Dorsolateral prefrontal cortex (tissue), 120 donors: ENCODE measurements at regions of chr7 and their contacts with region 1.

Region 1: DNA sequence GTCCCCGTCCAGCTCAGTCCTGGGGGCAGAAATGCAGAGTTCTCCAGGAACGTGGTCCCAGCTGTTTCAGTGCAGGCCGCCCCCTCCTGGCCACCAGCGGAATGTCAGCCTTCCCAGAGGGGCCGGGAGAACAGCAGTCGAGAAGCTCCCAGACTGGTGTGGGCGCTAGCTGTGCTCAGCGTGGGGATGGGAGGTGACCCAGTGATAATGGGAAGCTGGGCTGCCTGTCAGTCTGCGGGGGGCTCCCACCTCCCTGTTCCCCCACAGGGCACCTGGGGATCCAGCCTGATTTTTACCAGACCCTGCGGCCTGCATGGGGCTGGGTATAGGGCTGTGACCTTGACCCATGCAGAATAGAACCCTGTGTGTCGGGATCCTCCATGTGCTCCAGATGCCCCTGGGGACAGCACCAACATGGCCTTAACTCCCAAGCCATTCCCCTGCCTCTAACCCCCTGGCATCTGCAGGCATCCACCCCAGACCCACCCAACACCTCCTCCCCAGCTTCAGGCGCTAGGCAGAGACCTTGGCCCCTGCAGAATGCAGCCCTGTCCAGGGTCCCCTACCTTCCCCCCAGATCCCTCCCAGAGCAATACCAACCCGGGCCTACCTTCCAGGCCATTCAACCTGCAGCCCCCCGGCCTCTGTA is 946 bp upstream of the ELN start:
- DNase-seq: peak; percentile 75 to 89 (median 85)
- H3K4me3 ChIP-seq: peak overlapping the region in 50 of 59 donors; percentile 22 to 72 (median 58)
- H3K27ac ChIP-seq: peak overlapping the region; percentile 27 to 93 (median 83)
- H3K27me3 ChIP-seq: peaks cover 0 to 4% (median 0%) of the 10 kb centered on the region in 45 donors
- CTCF ChIP-seq: peak; percentile 76 to 98 (median 94)

Region 2: GRCh38 chr7:73811760-73812168 is 215.3 kb before region 1 on chr7:
- intact Hi-C with region 1: no loop called
- DNase-seq: peak in 5 of 10 donors; percentile 34 to 53 (median 39)
- H3K4me3 ChIP-seq: no peak overlapping the region
- H3K27ac ChIP-seq: no peak overlapping the region
- H3K27me3 ChIP-seq: peaks cover 0 to 13% (median 0%) of the 10 kb centered on the region in 45 donors
- CTCF ChIP-seq: peak in 54 of 56 donors; percentile 23 to 75 (median 58)

Region 3: GRCh38 chr7:73865738-73866445 is 161.1 kb before region 1 on chr7:
- intact Hi-C with region 1: loop called (anchors 2 to 10 kb)
- DNase-seq: peak in 6 of 10 donors; percentile 14 to 59 (median 46)
- H3K4me3 ChIP-seq: no peak overlapping the region
- H3K27ac ChIP-seq: no peak overlapping the region
- H3K27me3 ChIP-seq: no peaks in the 10 kb centered on the region
- CTCF ChIP-seq: peak in 55 of 56 donors; percentile 37 to 75 (median 61)

Region 4: DNA sequence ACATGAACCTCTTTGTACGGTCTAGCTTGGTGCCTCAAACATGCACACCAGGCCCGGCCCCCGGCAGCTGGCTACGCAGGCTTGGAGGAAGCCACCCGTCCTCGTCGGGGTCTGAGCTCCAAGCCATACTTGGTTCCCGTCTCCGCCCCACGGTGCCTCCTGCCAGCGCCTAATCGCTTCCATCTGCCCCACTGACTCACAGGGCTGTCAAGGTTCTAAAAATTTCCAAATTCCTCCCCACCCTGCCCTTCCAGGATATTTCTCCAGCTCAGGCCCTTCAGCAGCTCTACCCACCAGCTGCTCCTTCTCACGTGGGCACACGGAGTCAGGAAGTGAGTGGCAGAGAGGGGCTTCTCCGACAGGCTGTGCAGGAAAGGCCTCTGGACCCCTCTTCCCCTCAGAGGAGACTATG is 127.3 kb before region 1 on chr7:
- intact Hi-C with region 1: no loop called
- DNase-seq: no peak
- H3K4me3 ChIP-seq: no peak overlapping the region
- H3K27ac ChIP-seq: no peak overlapping the region
- H3K27me3 ChIP-seq: no peaks in the 10 kb centered on the region
- CTCF ChIP-seq: no peak

Region 5: DNA sequence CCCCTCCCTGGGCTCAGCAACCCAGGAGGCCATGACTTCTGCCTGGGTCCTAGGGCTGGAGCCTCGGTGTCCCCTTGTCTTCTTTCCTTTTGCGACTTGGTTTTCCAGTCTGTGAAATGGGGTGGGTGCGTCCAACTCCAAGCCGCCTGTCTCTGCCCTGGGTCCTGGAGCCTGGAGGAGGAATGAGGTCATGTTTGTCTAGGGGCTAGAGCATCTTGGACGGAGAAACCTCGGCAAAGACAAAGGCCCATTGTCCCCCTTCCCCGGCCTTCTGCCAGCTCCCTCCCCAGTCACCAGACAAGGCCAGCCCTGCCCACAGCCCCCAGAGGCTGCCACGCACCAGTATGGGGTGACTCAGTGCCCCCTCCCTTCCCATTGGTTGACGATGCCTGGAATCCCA is 38.8 kb before region 1 on chr7:
- intact Hi-C with region 1: loop called in 1 of 2 experiments (anchors 2 kb)
- DNase-seq: peak in 9 of 10 donors; percentile 57 to 81 (median 69)
- H3K4me3 ChIP-seq: no peak overlapping the region
- H3K27ac ChIP-seq: peak overlapping the region in 36 of 59 donors; percentile 1 to 84 (median 54)
- H3K27me3 ChIP-seq: no peaks in the 10 kb centered on the region
- CTCF ChIP-seq: peak in 1 of 56 donors; percentile 15

Region 6: GRCh38 chr7:74061840-74062539 is 35.0 kb after region 1 on chr7:
- intact Hi-C with region 1: loop called in 1 of 2 experiments (anchors 5 kb)
- DNase-seq: peak; percentile 44 to 85 (median 78)
- H3K4me3 ChIP-seq: peak overlapping the region in 54 of 59 donors; percentile 2 to 58 (median 36)
- H3K27ac ChIP-seq: peak overlapping the region in 58 of 59 donors; percentile 8 to 93 (median 81)
- H3K27me3 ChIP-seq: no peaks in the 10 kb centered on the region
- CTCF ChIP-seq: peak in 5 of 56 donors; percentile 13 to 16 (median 15)